ENCODE measurements at regions of chr5 and their contacts with region 1.

Region 1: DNA sequence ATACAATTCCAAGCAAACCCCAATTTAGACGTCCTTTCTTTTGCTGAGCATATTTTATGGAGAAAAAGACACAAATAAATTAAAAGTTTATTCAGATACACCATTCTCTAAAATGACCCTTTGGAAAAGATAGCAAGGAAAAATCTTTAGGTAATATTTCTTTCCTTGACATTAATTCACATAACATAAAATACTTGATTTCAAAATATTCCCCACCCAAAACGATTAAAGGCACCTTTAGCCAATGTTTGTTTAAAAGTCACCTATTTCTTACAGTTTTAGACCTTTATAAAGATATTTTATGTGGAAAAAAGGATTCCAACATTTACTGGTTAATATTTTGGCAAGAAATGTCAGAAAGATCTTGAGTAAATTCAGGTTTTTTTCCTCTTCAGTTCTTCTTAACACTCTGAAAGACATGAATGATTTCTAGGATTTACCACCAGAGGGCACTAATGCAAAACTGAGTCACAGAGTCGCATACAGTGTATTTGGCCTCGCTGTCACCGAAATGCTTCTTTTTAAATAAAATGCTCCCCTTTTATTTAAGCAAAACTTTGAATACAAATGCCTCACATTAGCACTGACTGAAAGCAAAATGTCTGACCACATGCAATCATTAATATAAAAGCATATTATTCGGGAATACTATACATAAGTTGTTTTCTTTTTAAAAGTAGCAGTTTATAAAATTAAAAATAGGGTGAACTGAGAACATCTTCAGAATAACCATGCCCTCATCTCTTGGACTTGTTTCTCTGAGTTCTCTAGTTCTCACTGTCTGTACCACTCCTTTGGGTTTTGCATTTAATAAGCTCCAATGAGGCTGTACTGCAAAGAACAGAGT is 122.5 kb downstream of the SLC1A3 start:
- DNase-seq: peak; percentile 62
- CTCF ChIP-seq: peak; percentile 75

Region 2: GRCh38 chr5:36690041-36690961 is 38.6 kb before region 1 on chr5:
- CTCF ChIA-PET with region 1: interaction called, 189 read pairs
- POLR2A ChIA-PET with region 1: no interaction called
- DNase-seq: peak; percentile 86
- CTCF ChIP-seq: peak; percentile 83

Region 3: GRCh38 chr5:36744773-36745589 is 16.1 kb after region 1 on chr5:
- CTCF ChIA-PET with region 1: interaction called, 95 read pairs
- POLR2A ChIA-PET with region 1: no interaction called
- DNase-seq: peak; percentile 75
- CTCF ChIP-seq: peak; percentile 72

Region 4: DNA sequence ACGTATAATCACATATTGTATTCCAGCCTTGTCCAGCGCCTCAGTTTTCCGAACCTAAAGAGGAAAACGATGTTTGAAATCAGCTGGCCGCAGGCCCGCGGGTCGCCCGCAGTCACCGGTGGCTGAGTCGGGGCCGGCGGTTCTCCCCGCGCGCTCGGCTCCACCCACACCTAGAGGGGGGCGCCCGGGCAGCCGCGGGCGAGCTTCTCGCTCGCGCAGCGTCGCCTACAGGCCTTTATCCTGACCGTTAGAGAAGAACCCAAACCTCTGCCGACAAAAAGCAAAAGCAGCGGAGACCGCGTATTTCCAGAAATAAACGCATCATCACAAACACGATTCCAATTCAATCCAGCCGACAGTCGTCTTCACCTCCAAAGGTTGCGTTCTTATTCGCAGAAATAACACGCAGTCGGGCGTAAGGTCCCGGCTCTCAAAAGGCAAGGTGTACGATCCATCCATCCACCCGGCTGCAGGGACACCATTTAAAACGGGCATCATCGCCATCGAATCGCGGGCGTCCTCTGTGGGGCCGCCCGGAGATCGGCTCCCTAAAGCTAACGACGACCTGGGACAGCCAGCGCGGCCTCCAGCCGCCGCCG is 147.0 kb after region 1 on chr5:
- CTCF ChIA-PET with region 1: interaction called, 11 read pairs
- POLR2A ChIA-PET with region 1: interaction called, 5 read pairs
- DNase-seq: peak; percentile 80
- CTCF ChIP-seq: peak; percentile 53

Region 5: DNA sequence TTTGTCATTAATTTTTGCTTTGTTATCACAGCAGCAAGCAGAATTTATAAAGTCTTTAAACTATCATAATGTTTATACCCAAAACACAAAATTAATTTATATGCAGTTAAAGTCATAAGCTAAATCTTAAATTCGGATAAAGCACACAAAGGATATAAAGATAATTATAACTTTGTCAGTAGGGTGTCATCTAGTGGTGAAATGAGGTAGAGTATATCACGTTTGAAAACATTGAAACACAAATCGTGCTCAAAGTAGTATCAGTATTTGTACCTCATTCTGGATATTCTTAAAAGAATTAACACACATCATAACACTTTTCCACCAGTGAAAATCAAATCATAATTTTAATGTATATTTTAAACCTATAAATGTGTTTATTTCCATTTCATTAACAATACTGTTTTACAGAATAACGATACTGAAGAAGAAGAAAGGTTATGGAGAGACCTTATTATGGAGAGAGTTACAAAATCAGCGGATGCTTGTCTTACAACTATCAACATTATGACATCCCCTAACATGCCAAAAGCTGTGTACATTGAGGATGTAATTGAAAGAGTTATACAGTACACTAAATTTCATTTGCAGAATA is 277.1 kb after region 1 on chr5:
- CTCF ChIA-PET with region 1: interaction called, 32 read pairs
- POLR2A ChIA-PET with region 1: no interaction called
- DNase-seq: peak; percentile 14
- CTCF ChIP-seq: peak; percentile 53

Measured in GM10248 (cell line).